A549 (cell line): ENCODE measurements at regions of chr14 and their contacts with region 1.

Region 1: DNA sequence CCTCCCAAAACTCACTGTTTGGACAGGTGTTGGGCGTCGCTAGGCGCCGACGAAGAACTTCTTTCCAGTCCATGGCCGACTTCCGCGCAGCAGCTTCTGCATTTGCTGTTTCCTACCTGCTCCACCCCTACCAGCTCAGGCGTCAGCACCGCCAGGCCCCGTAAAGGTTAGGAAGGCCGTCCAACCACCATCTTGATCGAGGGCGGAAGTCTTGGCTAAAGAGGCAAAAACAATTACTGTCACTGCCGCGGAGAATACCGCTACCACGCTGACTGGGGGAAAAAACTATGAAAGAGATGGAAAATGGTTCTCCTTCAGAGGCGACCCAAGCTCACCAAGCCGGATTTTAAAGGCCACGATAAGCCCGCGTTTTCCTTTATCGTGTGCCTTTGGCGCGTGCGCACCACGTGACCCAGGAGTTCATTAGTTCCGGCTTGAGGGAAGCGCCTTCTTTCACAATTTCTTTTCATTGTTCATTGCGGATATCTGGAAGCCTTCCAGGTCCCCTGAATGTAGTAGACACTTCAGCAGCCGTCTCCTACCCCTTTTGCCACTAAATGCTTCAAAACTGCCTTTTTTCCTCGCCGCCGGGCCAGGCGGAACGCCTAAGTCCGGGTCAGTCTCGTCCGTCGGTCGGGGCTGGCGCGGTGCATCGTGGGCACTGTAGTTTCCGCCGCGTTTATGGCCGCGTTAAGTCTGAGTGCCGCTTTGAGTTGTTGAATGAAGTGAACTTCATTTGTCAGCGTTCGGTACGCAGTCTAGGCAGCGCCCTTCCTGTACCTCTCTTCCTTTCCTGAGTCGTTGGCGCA is at the starts of genes PPP2R3C and PRORP:
- DNase-seq: peak; percentile 74 to 99
- ATAC-seq: peak; percentile 94 to 96
- H3K4me3 ChIP-seq: peak within 1 kb of the TSS; percentile 90
- H3K27ac ChIP-seq: peak within 1 kb of the TSS; percentile 97 to 99
- H3K4me1 ChIP-seq: peaks cover 11% of the 10 kb centered on the region; the same call in 1 of the 3 replicates
- CTCF ChIP-seq: no peak
- EP300 ChIP-seq: no peak
- POLR2A ChIP-seq: peak; percentile 26; the same call in 1 of the 2 replicates
- RAD21 ChIP-seq: no peak
- polyA plus RNA-seq, gene PPP2R3C: 24.1 and 32.1 TPM in 2 replicates
- polyA plus RNA-seq, gene PRORP: 38.8 and 40.0 TPM in 2 replicates

Region 2: GRCh38 chr14:35046048-35046741 is 75.9 kb before region 1 on chr14 and contains the start of gene FAM177A1:
- CTCF ChIA-PET with region 1: interaction called, 4 read pairs
- POLR2A ChIA-PET with region 1: interaction called, 22 read pairs
- DNase-seq: peak; percentile 96 to 98
- ATAC-seq: peak; percentile 93 to 97
- H3K4me3 ChIP-seq: peak within 1 kb of the TSS; percentile 82
- H3K27ac ChIP-seq: peak within 1 kb of the TSS; percentile 92 to 93
- H3K4me1 ChIP-seq: peaks cover 42% of the 10 kb centered on the region
- CTCF ChIP-seq: no peak
- EP300 ChIP-seq: no peak
- POLR2A ChIP-seq: peak; percentile 87
- RAD21 ChIP-seq: peak in 1 of 2 experiments; percentile 7; a peak in 1 of 5 replicates
- polyA plus RNA-seq, gene FAM177A1: 79.8 and 102 TPM in 2 replicates